ENCODE measurements at regions of chrX and their contacts with region 1.

Region 1: GRCh38 chrX:78103623-78104446 is at the start of gene PGK1:
- DNase-seq: peak; percentile 90 to 96
- H3K4me3 ChIP-seq: peak within 1 kb of the TSS; percentile 75
- H3K27ac ChIP-seq: peak within 1 kb of the TSS; percentile 83
- H3K4me1 ChIP-seq: peaks cover 43% of the 10 kb centered on the region
- H3K27me3 ChIP-seq: no peaks in the 10 kb centered on the region
- CTCF ChIP-seq: no peak
- total RNA-seq, gene PGK1: 320 and 409 TPM in 2 replicates

Region 2: GRCh38 chrX:77910108-77910840 is 193.6 kb before region 1 on chrX and contains the start of gene ATP7A:
- CTCF ChIA-PET with region 1: interaction called, 7 read pairs
- POLR2A ChIA-PET with region 1: no interaction called
- intact Hi-C with region 1: loop called (anchors 5 kb)
- DNase-seq: peak; percentile 78 to 85
- H3K4me3 ChIP-seq: peak within 1 kb of the TSS; percentile 92
- H3K27ac ChIP-seq: peak within 1 kb of the TSS; percentile 67
- H3K4me1 ChIP-seq: peaks cover 11% of the 10 kb centered on the region
- H3K27me3 ChIP-seq: no peaks in the 10 kb centered on the region
- CTCF ChIP-seq: peak; percentile 63
- total RNA-seq, gene ATP7A: 13.0 and 13.8 TPM in 2 replicates

Region 3: DNA sequence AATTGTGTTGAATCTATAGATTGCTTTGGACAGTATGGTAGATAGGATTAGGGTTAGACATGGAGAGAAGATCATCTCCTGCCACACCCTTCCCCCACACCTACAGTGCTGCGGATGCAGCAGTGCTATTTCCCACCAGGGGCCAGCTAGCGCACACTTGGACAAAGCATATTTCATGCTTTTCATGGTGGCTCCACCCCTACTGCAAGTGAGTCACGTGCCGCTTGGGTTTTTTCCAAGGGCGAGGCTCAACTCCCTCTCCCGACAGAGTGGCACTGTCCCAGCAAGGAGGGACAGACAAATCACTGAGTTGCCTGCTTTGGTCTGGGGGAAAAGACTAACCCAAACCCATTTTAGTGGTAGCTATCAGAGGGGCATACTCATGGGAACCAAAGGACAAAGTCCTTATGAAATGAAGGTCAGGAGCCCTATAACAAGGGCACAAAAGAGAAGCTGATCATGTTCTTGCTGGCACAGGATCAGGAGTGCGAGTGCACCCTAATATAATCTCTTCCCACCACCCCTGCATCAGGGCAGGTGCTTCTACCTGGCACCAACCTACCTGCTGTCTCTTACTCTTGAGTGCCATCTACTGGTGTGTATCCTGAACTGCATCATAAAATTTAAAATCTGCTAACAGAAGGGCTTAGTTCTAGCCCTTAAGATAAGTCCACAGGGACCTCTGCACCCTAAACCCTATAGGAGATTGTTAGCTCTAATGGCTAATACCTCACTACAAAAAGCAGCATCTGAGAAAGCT is 79.3 kb before region 1 on chrX:
- CTCF ChIA-PET with region 1: no interaction called
- POLR2A ChIA-PET with region 1: no interaction called
- intact Hi-C with region 1: loop called (anchors 5 kb)
- DNase-seq: peak; percentile 32 to 40
- H3K4me3 ChIP-seq: no peak overlapping the region
- H3K27ac ChIP-seq: no peak overlapping the region
- H3K4me1 ChIP-seq: peaks cover 12% of the 10 kb centered on the region
- H3K27me3 ChIP-seq: no peaks in the 10 kb centered on the region
- CTCF ChIP-seq: peak; percentile 89

Region 4: DNA sequence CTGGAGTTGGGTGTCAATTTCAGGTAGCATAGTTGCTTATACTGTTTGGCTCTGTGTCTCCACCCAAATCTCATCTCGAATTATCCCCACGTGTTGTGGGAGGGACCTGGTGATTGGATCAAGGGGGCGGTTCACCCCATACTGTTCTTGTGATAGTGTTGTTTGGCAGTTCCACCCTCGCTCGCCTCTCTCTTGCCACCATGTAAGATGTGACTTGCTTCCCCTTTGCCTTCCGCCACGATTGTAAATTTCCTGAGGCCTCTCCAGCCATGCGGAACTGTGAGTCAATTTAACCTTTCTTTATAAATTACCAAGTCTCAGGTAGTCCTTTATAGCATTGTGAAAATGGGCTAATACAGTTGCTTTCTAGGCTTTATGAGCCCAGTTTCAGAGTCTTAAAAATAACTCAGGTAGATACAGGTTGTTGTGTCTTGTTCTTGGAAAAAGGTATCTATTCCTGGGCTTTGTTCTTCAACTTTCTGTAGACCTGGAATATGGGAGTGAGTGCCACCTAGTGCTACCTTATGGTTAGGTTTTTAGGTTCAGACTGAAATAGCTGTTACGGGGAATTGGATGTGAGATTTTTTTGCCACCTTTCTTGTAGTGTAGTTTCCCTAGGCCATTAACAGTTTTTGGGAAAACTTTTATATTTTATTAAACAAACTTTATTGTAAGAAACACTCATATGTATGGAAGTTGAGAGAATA is 15.8 kb after region 1 on chrX:
- CTCF ChIA-PET with region 1: no interaction called
- POLR2A ChIA-PET with region 1: interaction called, 19 read pairs
- intact Hi-C with region 1: no loop called
- DNase-seq: no peak
- H3K4me3 ChIP-seq: no peak overlapping the region
- H3K27ac ChIP-seq: no peak overlapping the region
- H3K4me1 ChIP-seq: no peaks in the 10 kb centered on the region
- H3K27me3 ChIP-seq: no peaks in the 10 kb centered on the region
- CTCF ChIP-seq: peak; percentile 54; the same call in 1 of the 2 replicates